CD4-positive, alpha-beta memory T cell (primary cell): ENCODE measurements at regions of chr22 and their contacts with region 1.

Region 1: DNA sequence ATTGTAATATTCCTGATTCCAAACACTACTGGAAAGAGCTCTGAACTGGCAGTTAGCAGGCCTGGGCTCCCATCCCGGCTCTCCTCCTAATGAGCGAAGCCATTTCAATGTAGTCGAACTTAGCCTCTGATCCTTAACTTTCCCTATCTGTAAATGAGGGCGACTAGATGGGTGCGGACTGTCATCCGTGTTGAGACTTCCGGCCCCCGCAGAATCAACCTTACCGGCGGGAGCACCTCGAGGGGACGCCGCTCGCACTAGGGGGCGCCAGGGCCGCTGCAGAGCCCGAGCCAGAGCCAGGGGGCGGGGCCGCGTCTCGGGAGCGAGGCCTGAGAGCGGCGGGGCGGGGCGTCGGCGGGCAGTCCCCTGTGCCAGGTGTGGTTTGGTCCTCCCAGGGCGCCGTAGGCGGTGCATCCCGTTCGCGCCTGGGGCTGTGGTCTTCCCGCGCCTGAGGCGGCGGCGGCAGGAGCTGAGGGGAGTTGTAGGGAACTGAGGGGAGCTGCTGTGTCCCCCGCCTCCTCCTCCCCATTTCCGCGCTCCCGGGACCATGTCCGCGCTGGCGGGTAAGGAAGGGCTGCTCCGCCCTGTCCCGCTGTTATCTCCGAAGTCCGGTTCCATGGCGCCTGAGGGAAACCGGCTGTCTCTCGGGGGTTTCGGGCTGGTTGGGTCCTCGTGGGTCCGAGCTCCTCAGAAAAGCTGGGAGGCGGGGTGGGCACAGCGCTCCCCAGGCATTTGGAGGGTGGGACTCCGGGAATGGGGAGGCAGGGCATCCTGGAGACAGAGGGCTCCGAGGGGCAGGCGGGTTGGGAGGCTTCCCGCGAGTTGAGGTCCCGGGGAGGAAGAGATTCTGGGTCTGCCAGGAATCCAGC is at the start of gene LIMK2:
- DNase-seq: peak; percentile 93 to 94 (median 94)
- H3K4me3 ChIP-seq: peak within 1 kb of the TSS; percentile 74 to 92
- H3K4me3 Mint-ChIP-seq: peak within 1 kb of the TSS; percentile 89 to 98 (median 90)
- H3K27ac ChIP-seq: peak within 1 kb of the TSS; percentile 81
- H3K27ac Mint-ChIP-seq: peak within 1 kb of the TSS; percentile 76 to 97 (median 94)
- H3K4me1 ChIP-seq: peaks cover 61% of the 10 kb centered on the region
- H3K4me1 Mint-ChIP-seq: peaks cover 43 to 68% (median 50%) of the 10 kb centered on the region in 4 donors
- H3K27me3 ChIP-seq: no peaks in the 10 kb centered on the region
- H3K27me3 Mint-ChIP-seq: no peaks in the 10 kb centered on the region
- total RNA-seq, gene LIMK2: 32.2 to 33.2 TPM

Region 2: DNA sequence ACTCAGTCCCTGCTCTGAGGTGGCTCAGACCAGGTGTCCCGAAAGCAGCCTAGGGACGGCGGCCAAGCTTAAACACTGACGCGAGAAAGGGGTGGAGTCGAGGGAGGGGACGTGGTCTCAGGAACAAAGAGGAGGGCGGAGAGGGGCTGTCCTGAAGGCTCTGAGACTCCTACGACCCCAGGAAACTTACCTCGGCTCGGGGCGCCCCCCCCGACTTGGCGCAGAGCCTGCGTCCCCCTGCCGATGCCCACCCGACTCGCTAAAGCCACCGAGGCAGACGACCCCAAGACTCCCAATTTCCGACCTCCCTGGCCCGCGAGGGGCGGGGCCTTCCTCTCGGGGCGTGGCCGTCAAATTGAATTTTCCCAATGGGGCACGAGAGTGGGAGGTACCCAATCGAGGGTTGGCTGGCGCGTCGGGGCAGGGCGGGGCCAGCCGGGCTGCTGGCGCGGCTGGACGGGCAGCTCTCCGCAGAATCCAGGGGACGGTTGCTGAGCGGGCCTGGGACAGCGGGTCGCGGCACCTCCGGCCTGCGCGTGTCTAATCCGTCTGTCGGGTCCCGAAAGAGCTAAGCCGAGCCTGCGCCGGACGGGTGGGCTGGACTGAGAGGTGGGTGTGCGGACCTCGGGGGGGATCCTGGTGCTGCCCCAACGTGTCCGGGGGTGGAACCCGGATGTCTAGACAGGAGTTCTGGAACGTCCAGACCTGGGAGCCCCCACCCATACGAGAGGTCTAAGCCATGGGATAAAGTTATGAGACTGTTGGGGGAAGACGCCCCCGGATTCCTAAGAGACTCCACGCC is 131.0 kb before region 1 on chr22 and contains the start of gene SMTN:
- CTCF ChIA-PET with region 1: interaction called, 3 read pairs
- POLR2A ChIA-PET with region 1: interaction called, 3 read pairs
- intact Hi-C with region 1: loop called (anchors 1 kb)
- DNase-seq: peak; percentile 82 to 86 (median 84)
- H3K4me3 ChIP-seq: peak within 1 kb of the TSS; percentile 0 to 71
- H3K4me3 Mint-ChIP-seq: peak within 1 kb of the TSS; percentile 85 to 92 (median 90)
- H3K27ac ChIP-seq: peak within 1 kb of the TSS; percentile 25
- H3K27ac Mint-ChIP-seq: peak within 1 kb of the TSS; percentile 52 to 87 (median 73)
- H3K4me1 ChIP-seq: peaks cover 43% of the 10 kb centered on the region
- H3K4me1 Mint-ChIP-seq: peaks cover 18 to 40% (median 28%) of the 10 kb centered on the region in 4 donors
- H3K27me3 ChIP-seq: no peaks in the 10 kb centered on the region
- H3K27me3 Mint-ChIP-seq: no peaks in the 10 kb centered on the region
- total RNA-seq, gene SMTN: 1.6 to 1.7 TPM

Region 3: GRCh38 chr22:31160328-31160978 is 51.6 kb before region 1 on chr22:
- CTCF ChIA-PET with region 1: interaction called, 9 read pairs
- POLR2A ChIA-PET with region 1: interaction called, 9 read pairs
- intact Hi-C with region 1: loop called (anchors 2 kb)
- DNase-seq: peak in 3 of 5 donors; percentile 2 to 14 (median 12)
- H3K4me3 ChIP-seq: peak overlapping the region; percentile 71 to 90
- H3K4me3 Mint-ChIP-seq: peak overlapping the region; percentile 96 to 100 (median 99)
- H3K27ac ChIP-seq: peak overlapping the region; percentile 79
- H3K27ac Mint-ChIP-seq: peak overlapping the region; percentile 89 to 100 (median 99)
- H3K4me1 ChIP-seq: peaks cover 23% of the 10 kb centered on the region
- H3K4me1 Mint-ChIP-seq: peaks cover 25 to 46% (median 31%) of the 10 kb centered on the region in 4 donors
- H3K27me3 ChIP-seq: no peaks in the 10 kb centered on the region
- H3K27me3 Mint-ChIP-seq: peaks cover 0 to 1% of the 10 kb centered on the region in 2 donors

Region 4: DNA sequence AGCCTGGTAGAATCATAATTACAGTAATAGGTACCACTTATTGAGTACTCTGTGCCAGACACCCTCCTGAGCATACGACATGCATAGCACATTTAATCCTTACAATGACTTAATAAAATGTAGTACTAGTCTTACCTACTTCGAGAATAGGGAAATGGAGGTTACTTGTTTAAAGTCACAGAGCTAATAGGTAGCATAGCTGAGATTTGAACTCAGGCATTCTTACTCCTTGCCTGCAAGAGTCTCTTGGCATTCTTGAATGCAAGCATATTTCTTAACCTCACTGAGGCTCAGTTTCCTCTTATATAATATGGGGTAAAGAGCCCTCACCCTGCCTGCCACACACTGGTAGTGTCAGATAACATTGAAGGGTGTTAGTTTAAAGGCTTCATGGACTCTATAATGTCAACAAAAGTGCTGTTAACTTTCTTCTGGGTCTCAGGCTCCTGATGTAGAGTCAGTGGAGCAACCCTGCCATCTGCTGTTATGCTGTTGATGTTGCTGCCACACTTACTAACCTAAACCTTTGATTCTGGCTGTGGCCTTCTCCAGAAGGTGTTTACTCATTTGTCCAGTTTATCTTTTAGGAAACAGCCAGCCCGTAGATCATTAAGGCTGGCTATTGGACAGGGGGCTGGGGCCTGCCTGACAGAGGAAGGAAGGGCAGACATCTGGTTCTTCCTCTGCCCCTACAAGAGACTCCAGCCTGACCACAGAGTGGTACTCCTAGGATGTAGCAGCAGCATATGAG is 18.9 kb after region 1 on chr22:
- CTCF ChIA-PET with region 1: interaction called, 178 read pairs
- POLR2A ChIA-PET with region 1: interaction called, 75 read pairs
- intact Hi-C with region 1: loop called (anchors 1 kb)
- DNase-seq: peak; percentile 60 to 65 (median 61)
- H3K4me3 ChIP-seq: no peak overlapping the region
- H3K4me3 Mint-ChIP-seq: peak overlapping the region in 6 of 8 donors; percentile 21 to 84 (median 56)
- H3K27ac ChIP-seq: peak overlapping the region; percentile 43
- H3K27ac Mint-ChIP-seq: peak overlapping the region; percentile 81 to 96 (median 92)
- H3K4me1 ChIP-seq: peaks cover 30% of the 10 kb centered on the region
- H3K4me1 Mint-ChIP-seq: peaks cover 36 to 68% (median 54%) of the 10 kb centered on the region in 4 donors
- H3K27me3 ChIP-seq: no peaks in the 10 kb centered on the region
- H3K27me3 Mint-ChIP-seq: no peaks in the 10 kb centered on the region

Region 5: GRCh38 chr22:31278622-31279326 is 66.7 kb after region 1 on chr22:
- CTCF ChIA-PET with region 1: interaction called, 113 read pairs
- POLR2A ChIA-PET with region 1: interaction called, 86 read pairs
- intact Hi-C with region 1: loop called (anchors 2 kb)
- DNase-seq: peak; percentile 64 to 76 (median 73)
- H3K4me3 ChIP-seq: peak overlapping the region in 1 of 2 donors; percentile 17
- H3K4me3 Mint-ChIP-seq: peak overlapping the region; percentile 38 to 84 (median 77)
- H3K27ac ChIP-seq: peak overlapping the region; percentile 43
- H3K27ac Mint-ChIP-seq: peak overlapping the region; percentile 94 to 99 (median 97)
- H3K4me1 ChIP-seq: peaks cover 87% of the 10 kb centered on the region
- H3K4me1 Mint-ChIP-seq: peaks cover 57 to 92% (median 73%) of the 10 kb centered on the region in 4 donors
- H3K27me3 ChIP-seq: no peaks in the 10 kb centered on the region
- H3K27me3 Mint-ChIP-seq: no peaks in the 10 kb centered on the region

Region 6: GRCh38 chr22:31345331-31346254 is 133.5 kb after region 1 on chr22:
- CTCF ChIA-PET with region 1: no interaction called
- POLR2A ChIA-PET with region 1: interaction called, 10 read pairs
- intact Hi-C with region 1: no loop called
- DNase-seq: peak; percentile 91 to 94 (median 92)
- H3K4me3 ChIP-seq: peak overlapping the region; percentile 17 to 73
- H3K4me3 Mint-ChIP-seq: peak overlapping the region; percentile 85 to 98 (median 89)
- H3K27ac ChIP-seq: peak overlapping the region; percentile 56
- H3K27ac Mint-ChIP-seq: peak overlapping the region; percentile 78 to 96 (median 92)
- H3K4me1 ChIP-seq: peaks cover 52% of the 10 kb centered on the region
- H3K4me1 Mint-ChIP-seq: peaks cover 35 to 60% (median 43%) of the 10 kb centered on the region in 4 donors
- H3K27me3 ChIP-seq: no peaks in the 10 kb centered on the region
- H3K27me3 Mint-ChIP-seq: no peaks in the 10 kb centered on the region

Region 7: GRCh38 chr22:31363885-31364465 is 151.9 kb after region 1 on chr22:
- CTCF ChIA-PET with region 1: no interaction called
- POLR2A ChIA-PET with region 1: no interaction called
- intact Hi-C with region 1: no loop called
- DNase-seq: no peak
- H3K4me3 ChIP-seq: no peak overlapping the region
- H3K4me3 Mint-ChIP-seq: no peak overlapping the region
- H3K27ac ChIP-seq: no peak overlapping the region
- H3K27ac Mint-ChIP-seq: no peak overlapping the region
- H3K4me1 ChIP-seq: no peaks in the 10 kb centered on the region
- H3K4me1 Mint-ChIP-seq: no peaks in the 10 kb centered on the region
- H3K27me3 ChIP-seq: no peaks in the 10 kb centered on the region
- H3K27me3 Mint-ChIP-seq: no peaks in the 10 kb centered on the region